ENCODE measurements at regions of chr5 and their contacts with region 1.

Region 1: GRCh38 chr5:18305297-18305924 is 671.2 kb downstream of the TAF11L14 start:
- DNase-seq: peak; percentile 55
- H3K4me3 ChIP-seq: peak overlapping the region in 1 of 2 experiments; percentile 4; a peak in 1 of 4 replicates
- H3K27ac ChIP-seq: no peak overlapping the region
- H3K4me1 ChIP-seq: no peaks in the 10 kb centered on the region
- H3K27me3 ChIP-seq: no peaks in the 10 kb centered on the region
- CTCF ChIP-seq: peak; percentile 74
- EP300 ChIP-seq: no peak
- RAD21 ChIP-seq: peak; percentile 86

Region 2: GRCh38 chr5:18281682-18282557 is 23.5 kb before region 1 on chr5:
- CTCF ChIA-PET with region 1: interaction called, 15 read pairs
- POLR2A ChIA-PET with region 1: no interaction called
- DNase-seq: peak; percentile 51
- H3K4me3 ChIP-seq: no peak overlapping the region
- H3K27ac ChIP-seq: no peak overlapping the region
- H3K4me1 ChIP-seq: no peaks in the 10 kb centered on the region
- H3K27me3 ChIP-seq: no peaks in the 10 kb centered on the region
- CTCF ChIP-seq: peak; percentile 69
- EP300 ChIP-seq: no peak
- RAD21 ChIP-seq: peak; percentile 74

Region 3: DNA sequence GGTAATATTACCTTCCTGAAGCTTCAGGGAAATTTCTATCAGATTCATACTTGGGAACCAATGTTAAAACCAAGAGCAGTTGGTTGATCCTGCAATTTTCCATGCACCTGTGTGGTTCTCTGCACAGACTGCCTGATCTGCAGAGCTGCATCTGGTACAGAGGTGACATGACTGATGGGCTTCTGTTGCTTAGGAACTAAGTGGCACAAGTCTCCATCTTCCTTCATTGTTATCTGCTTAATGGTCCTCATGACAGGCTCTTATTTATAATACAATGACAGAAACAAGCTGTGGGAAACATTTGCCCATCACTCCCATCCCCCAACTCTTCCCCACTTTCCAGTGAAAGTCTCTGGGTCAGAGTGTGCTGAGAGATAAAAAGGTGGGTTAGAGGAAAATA is 127.9 kb after region 1 on chr5:
- CTCF ChIA-PET with region 1: no interaction called
- POLR2A ChIA-PET with region 1: no interaction called
- DNase-seq: peak; percentile 1
- H3K4me3 ChIP-seq: no peak overlapping the region
- H3K27ac ChIP-seq: no peak overlapping the region
- H3K4me1 ChIP-seq: no peaks in the 10 kb centered on the region; a peak in 1 of 4 replicates
- H3K27me3 ChIP-seq: no peaks in the 10 kb centered on the region
- CTCF ChIP-seq: no peak
- EP300 ChIP-seq: no peak
- RAD21 ChIP-seq: no peak

Region 4: GRCh38 chr5:18483450-18483849 is 178.0 kb after region 1 on chr5:
- CTCF ChIA-PET with region 1: no interaction called
- POLR2A ChIA-PET with region 1: no interaction called
- DNase-seq: no peak
- H3K4me3 ChIP-seq: no peak overlapping the region
- H3K27ac ChIP-seq: no peak overlapping the region
- H3K4me1 ChIP-seq: no peaks in the 10 kb centered on the region; a peak in 1 of 4 replicates
- H3K27me3 ChIP-seq: no peaks in the 10 kb centered on the region
- CTCF ChIP-seq: no peak
- EP300 ChIP-seq: no peak
- RAD21 ChIP-seq: no peak